ENCODE measurements at regions of chr21 and their contacts with region 1.

Region 1: GRCh38 chr21:44454747-44455523 is at the start of gene LRRC3:
- DNase-seq: peak; percentile 71

Region 2: DNA sequence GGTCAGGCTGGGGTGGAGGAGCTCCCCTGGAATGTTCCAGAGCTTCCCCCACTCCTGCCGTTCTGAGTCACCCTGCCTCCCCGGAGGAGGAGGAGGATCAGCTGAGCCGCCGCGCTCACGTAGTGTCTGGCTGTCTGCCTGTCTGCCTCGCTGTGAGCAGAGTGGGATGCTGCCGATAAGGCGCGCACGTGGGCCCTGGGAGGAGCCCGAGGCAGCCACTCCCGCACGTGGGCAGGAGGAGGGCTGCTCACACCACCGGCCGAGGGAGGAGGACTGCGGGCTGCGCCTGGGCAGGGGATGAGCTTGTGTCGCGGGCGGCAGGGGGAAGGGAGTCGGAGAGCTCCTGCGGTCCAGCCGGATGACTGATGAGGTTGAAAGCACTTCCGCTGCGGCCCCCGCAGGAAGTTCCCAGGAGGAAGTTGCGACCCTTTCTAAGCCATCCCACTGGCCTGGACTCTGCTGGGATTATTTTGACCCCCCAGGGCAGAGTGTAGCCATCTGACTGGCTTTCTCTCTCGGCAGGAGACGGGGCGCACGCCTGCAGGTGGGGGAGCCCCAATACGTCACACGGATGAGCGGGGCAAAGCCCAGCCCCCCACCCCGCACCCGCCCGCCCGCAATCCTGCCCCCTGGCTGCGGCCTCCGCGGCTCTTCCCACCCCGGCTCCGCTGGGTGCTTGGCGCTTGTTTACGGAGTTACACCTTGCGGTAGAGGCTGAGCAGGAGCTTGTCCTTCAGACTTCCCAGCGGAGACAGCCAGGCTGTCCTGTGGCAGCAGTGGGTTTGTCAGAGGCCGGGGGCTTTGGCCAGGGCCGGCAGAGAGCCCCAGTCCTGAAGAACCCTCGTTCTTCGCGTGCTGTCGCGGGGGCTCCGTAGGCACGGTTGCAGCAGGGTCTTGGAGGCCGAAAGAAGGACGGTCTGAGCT is 726.2 kb before region 1 on chr21:
- in situ Hi-C with region 1: loop called (anchors 25 kb)
- DNase-seq: peak; percentile 95

Region 3: GRCh38 chr21:44574444-44575306 is 119.7 kb after region 1 on chr21:
- in situ Hi-C with region 1: loop called (anchors 25 kb)
- DNase-seq: no peak

Region 4: GRCh38 chr21:44653656-44654575 is 199.0 kb after region 1 on chr21:
- in situ Hi-C with region 1: no loop called
- DNase-seq: no peak

Measured in KBM-7 (cell line).